Lower leg skin (tissue), 4 donors: ENCODE measurements at regions of chr9 and their contacts with region 1.

Region 1: GRCh38 chr9:134035041-134036039 is 10.1 kb downstream of the BRD3OS start:
- DNase-seq: no peak
- H3K4me3 ChIP-seq: no peak overlapping the region
- CTCF ChIP-seq: no peak
- POLR2A ChIP-seq: no peak

Region 2: DNA sequence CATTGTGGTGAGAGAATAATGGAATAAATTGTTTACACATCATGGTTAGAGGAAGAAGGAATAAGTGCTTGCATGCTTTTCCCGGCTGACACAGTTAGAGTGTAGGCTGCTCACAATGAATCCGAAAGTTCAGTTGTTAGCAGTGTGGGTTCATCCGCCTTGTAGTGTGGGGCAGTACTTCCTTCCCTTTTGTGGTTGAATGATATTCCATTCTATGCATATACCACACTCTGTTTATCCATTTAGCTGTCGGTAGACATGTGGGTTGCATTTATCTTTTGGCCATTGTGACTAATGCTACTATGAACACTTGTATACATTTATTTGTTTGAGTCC is 690.2 kb after region 1 on chr9:
- intact Hi-C with region 1: loop called (anchors 10 kb)
- DNase-seq: no peak
- H3K4me3 ChIP-seq: no peak overlapping the region
- CTCF ChIP-seq: no peak
- POLR2A ChIP-seq: no peak